ENCODE measurements at regions of chr20 and their contacts with region 1.

Region 1: GRCh38 chr20:46648903-46649649 is 2.2 kb downstream of the SLC13A3 start:
- DNase-seq: peak; percentile 64 to 92 (median 78)
- ATAC-seq: peak; percentile 94
- H3K4me3 ChIP-seq: no peak overlapping the region
- H3K27ac ChIP-seq: peak overlapping the region; percentile 63
- H3K4me1 ChIP-seq: peaks cover 20 to 22% of the 10 kb centered on the region in 2 experiments; a peak in 4 of 5 replicates
- H3K27me3 ChIP-seq: no peaks in the 10 kb centered on the region
- CTCF ChIP-seq: peak; percentile 14 to 22 (median 19); a peak in 1 of 6 replicates
- EP300 ChIP-seq: peak; percentile 64; the same call in 1 of the 2 replicates
- POLR2A ChIP-seq: no peak
- RAD21 ChIP-seq: no peak

Region 2: GRCh38 chr20:46509523-46509922 is 139.6 kb before region 1 on chr20:
- CTCF ChIA-PET with region 1: no interaction called
- POLR2A ChIA-PET with region 1: no interaction called
- in situ Hi-C with region 1: no loop called
- intact Hi-C with region 1: no loop called
- DNase-seq: no peak
- ATAC-seq: no peak
- H3K4me3 ChIP-seq: no peak overlapping the region
- H3K27ac ChIP-seq: no peak overlapping the region
- H3K4me1 ChIP-seq: peaks cover 0 to 7% of the 10 kb centered on the region in 2 experiments; a peak in 2 of 5 replicates
- H3K27me3 ChIP-seq: peaks cover 0 to 4% of the 10 kb centered on the region in 2 experiments; a peak in 1 of 5 replicates
- CTCF ChIP-seq: no peak
- EP300 ChIP-seq: no peak
- POLR2A ChIP-seq: no peak
- RAD21 ChIP-seq: no peak

Region 3: GRCh38 chr20:46607191-46607848 is 41.8 kb before region 1 on chr20:
- CTCF ChIA-PET with region 1: no interaction called
- POLR2A ChIA-PET with region 1: no interaction called
- in situ Hi-C with region 1: no loop called
- intact Hi-C with region 1: no loop called
- DNase-seq: no peak
- ATAC-seq: no peak
- H3K4me3 ChIP-seq: no peak overlapping the region
- H3K27ac ChIP-seq: no peak overlapping the region
- H3K4me1 ChIP-seq: no peaks in the 10 kb centered on the region; a peak in 1 of 5 replicates
- H3K27me3 ChIP-seq: no peaks in the 10 kb centered on the region
- CTCF ChIP-seq: no peak
- EP300 ChIP-seq: no peak
- POLR2A ChIP-seq: no peak
- RAD21 ChIP-seq: no peak

Region 4: DNA sequence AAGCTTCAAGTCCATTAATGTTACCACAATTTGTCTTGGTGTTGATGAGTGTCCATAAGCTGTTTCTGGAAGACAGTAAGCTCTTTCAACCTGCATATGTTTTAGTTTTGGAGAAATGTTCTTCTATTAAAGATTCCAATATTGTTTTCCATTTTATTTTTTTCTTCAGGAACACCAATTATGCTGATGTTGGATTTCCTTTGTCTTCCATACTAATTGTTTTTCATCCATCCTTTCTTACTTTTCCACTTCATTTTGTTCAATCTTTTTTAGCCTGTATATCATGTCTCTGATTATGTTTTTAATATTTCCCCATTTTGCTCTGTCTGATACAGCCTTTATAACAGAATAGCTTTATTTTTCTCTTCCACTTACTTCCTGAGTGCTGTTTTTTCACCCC is 19.7 kb before region 1 on chr20:
- CTCF ChIA-PET with region 1: no interaction called
- POLR2A ChIA-PET with region 1: interaction called, 3 read pairs
- in situ Hi-C with region 1: no loop called
- intact Hi-C with region 1: loop called (anchors 2 kb)
- DNase-seq: no peak
- ATAC-seq: no peak
- H3K4me3 ChIP-seq: no peak overlapping the region
- H3K27ac ChIP-seq: no peak overlapping the region
- H3K4me1 ChIP-seq: peaks cover 8 to 9% of the 10 kb centered on the region in 2 experiments; a peak in 4 of 5 replicates
- H3K27me3 ChIP-seq: no peaks in the 10 kb centered on the region
- CTCF ChIP-seq: no peak
- EP300 ChIP-seq: no peak
- POLR2A ChIP-seq: no peak
- RAD21 ChIP-seq: no peak

Region 5: DNA sequence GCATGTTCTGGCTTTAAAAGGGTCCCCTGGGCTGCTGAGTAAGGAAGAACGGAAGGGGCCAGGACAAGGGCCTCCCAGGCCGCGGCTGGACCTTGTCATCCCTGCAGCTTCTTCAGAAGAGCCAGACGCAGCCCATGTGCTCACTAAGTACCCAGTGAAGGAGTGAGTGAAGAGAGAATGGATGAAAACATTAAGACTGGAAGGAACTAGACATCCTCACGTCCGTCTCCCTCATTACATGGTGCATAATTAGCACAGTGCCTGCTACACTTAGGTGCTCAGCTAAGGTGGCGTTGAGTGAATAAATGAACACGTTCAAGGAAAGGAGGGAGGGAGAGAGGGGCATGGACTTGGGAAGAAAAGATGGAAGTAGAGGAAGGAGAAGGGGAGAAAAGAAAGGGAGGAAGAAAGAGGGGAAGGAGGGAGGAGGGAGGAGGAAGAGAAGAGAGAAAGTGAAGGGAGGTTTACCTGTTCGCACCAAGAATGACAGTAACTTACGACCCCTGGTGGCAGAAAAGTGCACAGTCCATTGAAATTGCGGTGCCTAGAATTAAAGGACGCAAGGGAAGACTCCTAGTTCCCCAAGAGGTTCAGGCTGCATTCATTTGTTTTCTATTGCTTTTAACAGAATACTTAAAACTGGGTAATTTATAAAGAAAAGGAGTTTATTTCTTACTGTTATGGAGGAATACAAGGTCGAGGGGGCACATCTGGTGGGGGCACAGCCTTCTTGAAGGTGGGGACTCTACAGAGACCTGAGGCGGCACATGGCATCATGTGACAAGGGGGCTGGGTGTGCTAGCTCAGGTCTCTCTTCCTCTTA is 32.2 kb after region 1 on chr20:
- CTCF ChIA-PET with region 1: no interaction called
- POLR2A ChIA-PET with region 1: interaction called, 10 read pairs
- in situ Hi-C with region 1: no loop called
- intact Hi-C with region 1: loop called (anchors 5 kb)
- DNase-seq: peak; percentile 56 to 81 (median 62)
- ATAC-seq: peak; percentile 46
- H3K4me3 ChIP-seq: no peak overlapping the region
- H3K27ac ChIP-seq: no peak overlapping the region
- H3K4me1 ChIP-seq: peaks cover 3 to 25% of the 10 kb centered on the region in 2 experiments; a peak in 4 of 5 replicates
- H3K27me3 ChIP-seq: no peaks in the 10 kb centered on the region
- CTCF ChIP-seq: peak; percentile 78 to 83 (median 82)
- EP300 ChIP-seq: no peak
- POLR2A ChIP-seq: 0 out of 2 replicates have a peak, but pooled peaks have one; percentile 26
- RAD21 ChIP-seq: peak; percentile 47 to 81; a peak in 3 of 4 replicates